Heart left ventricle (tissue), 16 donors: ENCODE measurements at regions of chr1 and their contacts with region 1.

Region 1: GRCh38 chr1:32448773-32449456 is 16.0 kb upstream of the ZBTB8B start:
- DNase-seq: no peak
- ATAC-seq: no peak
- H3K4me3 ChIP-seq: no peak overlapping the region
- H3K27ac ChIP-seq: no peak overlapping the region
- H3K4me1 ChIP-seq: peaks cover 0 to 3% (median 0%) of the 10 kb centered on the region in 12 donors
- H3K27me3 ChIP-seq: peaks cover 0 to 8% (median 0%) of the 10 kb centered on the region in 9 donors
- CTCF ChIP-seq: peak in 4 of 12 donors; percentile 7 to 20 (median 12)
- POLR2A ChIP-seq: no peak

Region 2: DNA sequence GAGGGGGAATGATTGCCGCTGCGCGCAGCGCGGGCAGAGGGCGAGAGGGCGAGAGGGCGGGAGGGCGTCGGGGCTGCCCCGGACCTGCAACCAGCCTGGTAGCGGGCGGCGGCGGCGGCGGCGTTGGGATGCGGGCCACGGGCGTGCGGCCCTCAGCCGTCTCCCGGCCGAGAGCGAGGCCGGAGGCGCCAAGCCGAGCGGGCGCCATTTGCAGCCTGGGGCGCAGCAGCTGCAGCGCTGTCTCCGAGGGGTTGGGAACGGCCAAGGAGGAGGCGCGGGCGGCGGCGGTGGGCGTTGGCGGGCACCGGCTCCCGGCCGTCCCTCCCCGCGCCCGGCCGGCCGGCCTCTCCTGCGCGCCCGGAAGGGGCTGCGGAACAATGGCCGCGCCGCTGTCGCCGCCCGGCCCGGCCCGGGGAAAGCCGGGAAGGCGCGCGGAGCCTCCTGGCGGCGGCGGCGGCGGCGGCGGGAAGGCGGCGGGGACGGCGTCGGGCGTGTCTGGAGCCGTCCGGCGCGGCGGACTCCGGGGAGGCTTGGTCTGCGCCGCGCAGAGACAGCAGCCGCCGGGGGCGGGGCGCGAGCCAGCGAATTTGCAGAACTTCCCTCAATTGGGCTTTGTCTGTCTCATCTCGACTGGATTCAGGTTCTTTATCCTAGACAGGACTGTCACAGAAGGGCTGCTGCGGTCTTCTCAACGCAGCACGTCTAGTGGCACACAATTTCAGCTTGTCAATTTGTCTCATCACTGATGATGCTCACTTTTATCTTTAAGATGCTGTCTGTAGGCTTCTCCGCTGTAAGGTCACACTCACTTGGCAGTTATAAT is 51.7 kb after region 1 on chr1:
- intact Hi-C with region 1: loop called in 1 of 10 experiments (anchors 2 kb)
- DNase-seq: peak; percentile 74 to 89 (median 79)
- ATAC-seq: peak; percentile 45 to 92 (median 86)
- H3K4me3 ChIP-seq: peak overlapping the region; percentile 61 to 95 (median 82)
- H3K27ac ChIP-seq: peak overlapping the region; percentile 91 to 100 (median 96)
- H3K4me1 ChIP-seq: peaks cover 2 to 24% (median 18%) of the 10 kb centered on the region in 12 donors
- H3K27me3 ChIP-seq: no peaks in the 10 kb centered on the region
- CTCF ChIP-seq: peak in 8 of 12 donors; percentile 8 to 49 (median 36)
- POLR2A ChIP-seq: peak in 1 of 2 donors; percentile 56

Region 3: DNA sequence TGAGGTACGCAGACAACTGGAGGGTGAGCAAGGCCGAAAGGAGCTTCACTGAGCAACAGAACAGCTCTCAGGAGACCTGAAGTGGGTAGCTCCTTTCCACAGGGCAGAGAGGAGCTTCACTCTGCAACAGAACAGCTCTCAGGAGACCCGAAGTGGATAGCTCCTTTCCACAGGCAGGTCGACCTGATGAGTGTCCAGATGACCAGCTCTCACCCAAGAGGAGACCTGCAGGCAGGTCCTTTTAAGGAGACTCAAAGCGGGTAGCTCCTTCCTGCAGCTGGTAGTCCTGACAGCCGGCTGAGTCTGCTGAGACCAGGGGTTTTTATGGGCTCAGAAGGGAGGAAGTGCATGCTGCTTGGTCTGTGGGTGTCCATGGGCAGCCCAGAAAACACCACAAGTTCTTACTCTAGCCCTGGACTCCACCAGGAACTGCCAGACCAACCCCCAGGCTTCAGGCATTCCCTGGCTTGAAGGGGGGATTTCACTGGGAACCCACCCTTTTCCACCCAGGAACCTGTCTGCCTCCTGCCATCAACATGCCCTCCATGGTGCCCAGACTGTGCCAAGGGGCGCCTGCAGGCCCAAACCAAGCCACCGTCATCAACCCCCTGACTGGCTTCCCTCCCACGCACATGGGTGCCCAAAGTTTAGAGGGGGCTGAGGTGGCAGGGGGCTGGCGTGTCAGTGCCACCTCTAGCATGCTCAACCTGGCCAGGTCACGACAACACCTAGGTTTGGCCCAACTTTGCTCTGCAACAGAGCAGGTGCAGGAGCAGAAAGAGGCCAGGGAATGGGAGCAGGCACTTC is 157.9 kb after region 1 on chr1:
- intact Hi-C with region 1: loop called in 2 of 10 experiments (anchors 10 kb)
- DNase-seq: no peak
- ATAC-seq: no peak
- H3K4me3 ChIP-seq: no peak overlapping the region
- H3K27ac ChIP-seq: no peak overlapping the region
- H3K4me1 ChIP-seq: peaks cover 0 to 5% (median 0%) of the 10 kb centered on the region in 12 donors
- H3K27me3 ChIP-seq: no peaks in the 10 kb centered on the region
- CTCF ChIP-seq: no peak
- POLR2A ChIP-seq: no peak

Region 4: GRCh38 chr1:32619701-32620485 is 171.0 kb after region 1 on chr1:
- intact Hi-C with region 1: loop called in 4 of 10 experiments (anchors 5 to 10 kb)
- DNase-seq: no peak
- ATAC-seq: no peak
- H3K4me3 ChIP-seq: no peak overlapping the region
- H3K27ac ChIP-seq: no peak overlapping the region
- H3K4me1 ChIP-seq: no peaks in the 10 kb centered on the region
- H3K27me3 ChIP-seq: no peaks in the 10 kb centered on the region
- CTCF ChIP-seq: peak in 6 of 12 donors; percentile 13 to 28 (median 20)
- POLR2A ChIP-seq: no peak